Activated T-helper 1 cell treated with anti-CD3 and anti-CD28 coated beads, Interleukin-12 subunit alpha, Interleukin-12 subunit beta, Interleukin-2, Interleukin-4 antibody, amounts not matched to agents 30 ng/mL and 10 ng/mL and 1 ng/mL, durations not matched to agents 14 hours and 24 hours and 36 hours (primary cell): ENCODE measurements at regions of chr20 and their contacts with region 1.

Region 1: GRCh38 chr20:49812463-49813304 is at the start of gene SLC9A8:
- DNase-seq: peak; percentile 83
- H3K4me3 Mint-ChIP-seq: peak within 1 kb of the TSS; percentile 91
- H3K27ac Mint-ChIP-seq: peak within 1 kb of the TSS; percentile 97
- H3K4me1 Mint-ChIP-seq: peaks cover 50% of the 10 kb centered on the region
- H3K27me3 Mint-ChIP-seq: no peaks in the 10 kb centered on the region
- total RNA-seq, gene SLC9A8: 16.2 and 20.8 TPM in 2 replicates

Region 2: GRCh38 chr20:49186535-49187329 is 626.0 kb before region 1 on chr20:
- intact Hi-C with region 1: loop called (anchors 5 kb)
- DNase-seq: peak; percentile 66
- H3K4me3 Mint-ChIP-seq: peak overlapping the region; percentile 89
- H3K27ac Mint-ChIP-seq: peak overlapping the region; percentile 81
- H3K4me1 Mint-ChIP-seq: peaks cover 50% of the 10 kb centered on the region
- H3K27me3 Mint-ChIP-seq: peaks cover 4% of the 10 kb centered on the region

Region 3: GRCh38 chr20:49668181-49668877 is 144.4 kb before region 1 on chr20:
- intact Hi-C with region 1: loop called (anchors 2 kb)
- DNase-seq: no peak
- H3K4me3 Mint-ChIP-seq: peak overlapping the region; percentile 5
- H3K27ac Mint-ChIP-seq: no peak overlapping the region
- H3K4me1 Mint-ChIP-seq: peaks cover 62% of the 10 kb centered on the region
- H3K27me3 Mint-ChIP-seq: peaks cover 3% of the 10 kb centered on the region

Region 4: DNA sequence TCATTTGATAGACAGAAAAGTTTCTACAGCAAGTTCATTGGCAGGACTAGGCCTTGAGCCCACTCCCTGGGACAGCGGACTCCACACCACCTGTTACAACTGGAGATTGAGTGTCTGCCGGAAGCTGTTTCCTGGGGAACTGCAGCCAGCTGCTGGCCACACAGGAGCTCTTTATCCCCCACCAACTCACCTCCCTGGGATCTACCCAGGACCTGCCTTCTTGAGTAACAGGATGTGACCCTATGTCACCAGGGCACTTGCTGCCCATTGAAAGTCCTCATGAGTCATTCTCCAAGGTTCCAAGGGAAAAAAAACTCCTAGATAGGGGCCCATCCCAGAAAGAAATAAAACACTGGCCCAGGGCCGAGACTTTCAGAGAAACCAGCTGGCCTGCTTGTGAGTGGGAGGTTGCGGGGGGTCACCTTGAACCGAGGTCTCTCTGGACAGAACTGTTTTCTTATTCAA is 37.4 kb before region 1 on chr20:
- intact Hi-C with region 1: loop called (anchors 2 kb)
- DNase-seq: no peak
- H3K4me3 Mint-ChIP-seq: no peak overlapping the region
- H3K27ac Mint-ChIP-seq: peak overlapping the region; percentile 1
- H3K4me1 Mint-ChIP-seq: peaks cover 32% of the 10 kb centered on the region
- H3K27me3 Mint-ChIP-seq: peaks cover 5% of the 10 kb centered on the region

Region 5: DNA sequence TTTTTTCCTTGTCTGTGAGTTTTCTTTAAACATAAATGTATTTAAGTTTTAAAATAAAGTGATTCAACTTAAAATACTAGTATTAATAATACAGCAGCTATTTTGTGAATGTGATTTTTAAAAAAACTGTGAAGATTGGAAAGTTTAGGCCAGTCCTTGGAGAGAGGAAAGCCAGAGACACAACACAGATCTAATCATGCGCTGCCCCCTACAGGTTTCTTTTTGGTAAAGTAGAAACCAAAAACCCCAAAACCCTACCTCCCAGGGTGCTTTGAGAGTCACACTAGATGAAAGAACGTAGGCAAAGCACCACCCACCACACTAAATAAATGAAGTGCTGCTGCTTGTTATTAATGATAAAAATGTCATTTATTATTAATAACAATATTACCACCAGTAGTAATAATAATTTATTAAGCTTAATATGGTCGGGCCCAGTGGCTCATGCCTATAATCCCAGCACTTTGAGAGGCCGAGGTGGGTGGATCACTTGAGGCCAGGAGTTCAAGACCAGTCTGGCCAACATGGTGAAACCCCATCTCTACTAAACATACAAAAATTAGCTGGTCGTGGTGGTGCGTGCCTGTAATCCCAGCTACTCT is 33.6 kb after region 1 on chr20:
- intact Hi-C with region 1: loop called (anchors 1 kb)
- DNase-seq: peak; percentile 42
- H3K4me3 Mint-ChIP-seq: no peak overlapping the region
- H3K27ac Mint-ChIP-seq: no peak overlapping the region
- H3K4me1 Mint-ChIP-seq: peaks cover 19% of the 10 kb centered on the region
- H3K27me3 Mint-ChIP-seq: no peaks in the 10 kb centered on the region

Region 6: DNA sequence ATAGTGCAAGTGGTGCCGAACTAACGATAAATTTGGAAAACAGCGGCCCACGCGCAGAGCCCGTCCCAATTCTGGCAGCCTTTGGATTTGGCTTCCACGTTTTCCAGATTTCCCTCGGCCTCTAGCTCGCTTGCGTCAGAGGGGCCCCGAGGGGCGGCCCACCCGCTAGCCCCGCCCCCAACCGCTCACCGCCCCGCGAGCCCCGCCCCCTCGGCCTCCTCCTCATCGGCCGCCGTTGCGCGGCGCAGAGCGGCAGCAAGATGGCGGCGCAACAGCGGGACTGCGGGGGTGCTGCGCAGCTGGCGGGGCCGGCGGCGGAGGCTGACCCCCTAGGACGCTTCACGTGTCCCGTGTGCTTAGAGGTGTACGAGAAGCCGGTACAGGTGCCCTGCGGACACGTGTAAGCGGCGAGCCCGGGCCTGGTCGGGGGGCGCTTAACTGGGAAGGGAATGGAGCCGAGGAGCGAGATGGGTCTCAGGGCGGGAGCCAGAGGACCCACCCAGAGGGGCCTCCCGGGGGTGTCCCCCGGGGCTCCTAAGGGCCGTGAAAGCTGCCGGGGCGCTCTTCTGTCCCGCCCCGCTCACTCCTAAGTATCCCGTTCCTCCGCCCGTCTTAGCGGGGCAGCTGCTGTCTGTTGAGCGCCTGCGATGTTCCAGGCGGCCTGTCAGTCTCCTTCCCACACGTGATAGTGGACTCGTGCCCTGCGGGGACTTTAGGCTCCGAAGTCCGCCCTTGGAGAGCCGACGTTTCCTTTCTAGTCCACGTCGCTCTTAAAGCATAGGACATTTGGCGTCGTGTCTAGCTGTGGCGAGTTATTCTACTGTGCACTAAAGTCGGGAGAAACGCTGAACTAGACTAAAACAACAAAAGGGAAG is 123.7 kb after region 1 on chr20 and contains the start of gene RNF114:
- intact Hi-C with region 1: loop called (anchors 2 kb)
- DNase-seq: peak; percentile 82
- H3K4me3 Mint-ChIP-seq: peak within 1 kb of the TSS; percentile 94
- H3K27ac Mint-ChIP-seq: peak within 1 kb of the TSS; percentile 93
- H3K4me1 Mint-ChIP-seq: peaks cover 34% of the 10 kb centered on the region
- H3K27me3 Mint-ChIP-seq: no peaks in the 10 kb centered on the region
- total RNA-seq, gene RNF114: 58.7 and 60.3 TPM in 2 replicates